MCF 10A (cell line): ENCODE measurements at regions of chr12 and their contacts with region 1.

Region 1: DNA sequence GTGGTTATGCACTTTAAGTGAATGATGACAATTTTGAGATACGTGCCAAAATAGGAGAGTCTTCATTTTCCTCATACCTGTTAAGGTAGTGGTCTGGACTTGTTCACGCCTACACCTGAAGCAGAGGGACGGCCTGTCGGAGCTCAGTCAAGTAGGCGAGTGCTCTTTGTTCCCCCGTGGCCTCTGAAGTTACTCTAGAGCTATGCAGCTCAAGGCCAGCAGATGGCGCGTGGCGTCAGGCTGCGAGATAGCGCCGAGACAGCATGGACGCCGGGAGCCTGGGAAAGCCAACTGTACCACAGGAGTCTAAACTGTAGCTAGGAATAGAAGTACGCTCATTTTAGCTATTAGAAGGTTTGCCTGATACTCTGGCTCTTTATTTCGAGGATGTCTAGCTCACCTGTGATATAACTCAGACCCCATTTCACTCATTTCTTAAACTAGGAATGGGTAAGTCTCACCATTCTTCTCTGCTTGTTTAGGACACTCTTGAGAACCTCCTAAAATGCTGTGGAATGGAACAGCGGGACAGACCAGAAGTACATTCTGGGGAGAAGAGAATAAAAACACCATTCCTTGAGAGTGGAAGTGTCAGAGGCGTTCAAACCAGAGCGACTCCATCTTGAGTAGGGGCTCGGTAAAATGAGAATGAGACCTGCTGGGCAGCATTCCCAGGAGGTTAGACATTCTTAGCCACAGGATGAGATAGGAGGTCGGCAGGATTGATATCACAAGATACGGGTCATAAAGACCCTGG is 267.4 kb upstream of the HMGA2 start:
- DNase-seq: peak; percentile 88
- H3K4me3 Mint-ChIP-seq: no peak overlapping the region
- H3K27ac Mint-ChIP-seq: peak overlapping the region; percentile 49
- H3K4me1 Mint-ChIP-seq: peaks cover 6% of the 10 kb centered on the region
- H3K27me3 Mint-ChIP-seq: no peaks in the 10 kb centered on the region
- CTCF ChIP-seq: peak; percentile 89

Region 2: DNA sequence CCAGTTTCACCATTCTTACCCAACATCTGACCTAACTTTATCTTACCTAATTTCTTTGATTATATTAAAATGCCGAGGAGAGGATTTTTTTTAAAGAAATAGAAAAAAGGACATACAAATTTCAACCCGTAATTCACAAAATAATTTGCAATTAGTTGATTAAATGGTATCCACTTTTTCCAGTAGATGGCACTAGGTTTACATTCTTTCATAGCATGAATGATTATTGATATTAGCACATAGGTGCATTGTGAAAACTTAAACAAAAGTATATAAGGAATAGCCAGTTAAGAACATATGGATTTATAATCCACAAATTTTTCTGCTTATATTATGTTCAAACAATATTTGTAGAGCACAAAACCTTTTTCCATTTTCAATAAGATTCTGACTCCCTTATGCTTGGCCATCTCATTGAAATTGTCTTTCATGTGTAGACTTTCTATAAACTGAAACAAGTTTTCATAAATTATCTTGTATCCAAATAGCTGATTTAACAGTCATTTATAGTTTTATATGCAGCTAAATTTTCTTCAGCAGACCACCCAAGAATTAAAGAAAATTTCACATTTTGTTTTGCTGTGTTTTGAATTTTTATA is 243.0 kb before region 1 on chr12:
- CTCF ChIA-PET with region 1: interaction called, 23 read pairs
- POLR2A ChIA-PET with region 1: interaction called, 4 read pairs
- intact Hi-C with region 1: loop called (anchors 2 kb)
- DNase-seq: peak; percentile 52
- H3K4me3 Mint-ChIP-seq: no peak overlapping the region
- H3K27ac Mint-ChIP-seq: no peak overlapping the region
- H3K4me1 Mint-ChIP-seq: peaks cover 12% of the 10 kb centered on the region
- H3K27me3 Mint-ChIP-seq: no peaks in the 10 kb centered on the region
- CTCF ChIP-seq: peak; percentile 66

Region 3: GRCh38 chr12:65546528-65546927 is 10.3 kb before region 1 on chr12:
- CTCF ChIA-PET with region 1: interaction called, 12 read pairs
- POLR2A ChIA-PET with region 1: no interaction called
- intact Hi-C with region 1: no loop called
- DNase-seq: no peak
- H3K4me3 Mint-ChIP-seq: no peak overlapping the region
- H3K27ac Mint-ChIP-seq: no peak overlapping the region
- H3K4me1 Mint-ChIP-seq: no peaks in the 10 kb centered on the region
- H3K27me3 Mint-ChIP-seq: no peaks in the 10 kb centered on the region
- CTCF ChIP-seq: no peak

Region 4: GRCh38 chr12:65673732-65674131 is 116.9 kb after region 1 on chr12:
- CTCF ChIA-PET with region 1: interaction called, 50 read pairs
- POLR2A ChIA-PET with region 1: interaction called, 4 read pairs
- intact Hi-C with region 1: loop called (anchors 1 kb)
- DNase-seq: peak; percentile 60
- H3K4me3 Mint-ChIP-seq: no peak overlapping the region
- H3K27ac Mint-ChIP-seq: peak overlapping the region; percentile 88
- H3K4me1 Mint-ChIP-seq: peaks cover 29% of the 10 kb centered on the region
- H3K27me3 Mint-ChIP-seq: no peaks in the 10 kb centered on the region
- CTCF ChIP-seq: peak; percentile 25

Region 5: DNA sequence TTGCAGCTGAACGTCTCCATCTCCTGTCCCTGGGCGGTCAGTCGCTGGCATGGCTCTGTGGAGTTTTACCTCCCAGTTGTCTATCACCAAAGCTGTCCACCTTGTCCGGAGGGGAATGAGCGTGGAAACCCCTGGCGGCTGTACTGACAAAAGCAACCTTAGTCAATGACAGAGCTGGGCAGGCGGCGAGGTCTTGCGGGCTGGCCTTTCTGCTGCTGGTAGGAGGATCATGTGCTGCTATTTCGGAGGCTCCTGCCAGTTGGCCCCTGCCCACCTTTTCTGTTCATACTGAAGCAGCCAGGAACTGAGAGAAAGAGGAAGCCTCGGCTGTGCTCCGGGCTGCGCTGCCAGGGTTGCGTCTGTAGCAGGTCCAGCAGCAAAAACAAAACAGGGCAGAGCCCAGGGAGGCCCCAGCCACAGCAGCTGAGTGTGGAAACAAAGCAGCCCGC is 325.1 kb after region 1 on chr12:
- CTCF ChIA-PET with region 1: interaction called, 17 read pairs
- POLR2A ChIA-PET with region 1: no interaction called
- intact Hi-C with region 1: loop called (anchors 1 kb)
- DNase-seq: no peak
- H3K4me3 Mint-ChIP-seq: no peak overlapping the region
- H3K27ac Mint-ChIP-seq: peak overlapping the region; percentile 80
- H3K4me1 Mint-ChIP-seq: peaks cover 55% of the 10 kb centered on the region
- H3K27me3 Mint-ChIP-seq: no peaks in the 10 kb centered on the region
- CTCF ChIP-seq: no peak

Region 6: GRCh38 chr12:66087365-66087943 is 530.6 kb after region 1 on chr12:
- CTCF ChIA-PET with region 1: interaction called, 10 read pairs
- POLR2A ChIA-PET with region 1: no interaction called
- intact Hi-C with region 1: loop called (anchors 1 kb)
- DNase-seq: peak; percentile 79
- H3K4me3 Mint-ChIP-seq: no peak overlapping the region
- H3K27ac Mint-ChIP-seq: no peak overlapping the region
- H3K4me1 Mint-ChIP-seq: peaks cover under 1% of the 10 kb centered on the region
- H3K27me3 Mint-ChIP-seq: no peaks in the 10 kb centered on the region
- CTCF ChIP-seq: peak; percentile 72